ENCODE measurements at regions of chr4 and their contacts with region 1.

Region 1: DNA sequence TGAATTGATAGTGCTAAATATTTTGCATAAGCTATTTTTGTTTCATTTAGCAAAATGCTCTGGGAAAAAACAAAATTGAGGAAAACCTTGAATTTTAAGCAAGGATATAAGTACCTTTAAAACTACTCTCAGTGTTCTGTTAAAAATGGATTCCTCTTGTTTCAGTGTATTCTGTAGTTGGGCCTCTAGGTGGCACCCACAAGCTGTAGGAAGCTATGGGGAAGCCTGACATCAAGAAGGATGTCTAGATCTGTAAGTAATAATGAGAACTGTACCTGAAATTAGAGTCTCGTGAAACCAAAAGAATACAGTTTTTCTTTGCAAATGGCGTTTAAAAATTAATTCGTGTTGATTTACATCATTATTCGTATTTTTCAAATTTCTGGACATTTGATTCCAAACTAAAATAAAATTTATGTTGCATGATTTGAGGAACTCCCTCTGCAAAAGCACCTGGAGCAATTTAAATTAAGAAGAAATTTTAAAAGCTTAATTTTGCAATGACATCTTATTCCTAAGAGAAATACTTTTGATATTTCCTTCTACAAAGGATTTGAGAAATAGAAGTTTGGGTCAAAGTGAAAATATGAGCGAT is 51.2 kb downstream of the TMPRSS11E start:
- DNase-seq: peak; percentile 62
- ATAC-seq: peak; percentile 96
- H3K4me3 ChIP-seq: no peak overlapping the region
- H3K27ac ChIP-seq: no peak overlapping the region
- H3K4me1 ChIP-seq: no peaks in the 10 kb centered on the region
- H3K27me3 ChIP-seq: no peaks in the 10 kb centered on the region
- CTCF ChIP-seq: peak; percentile 88
- POLR2A ChIP-seq: no peak
- RAD21 ChIP-seq: peak; percentile 88

Region 2: GRCh38 chr4:68476191-68476590 is 22.3 kb before region 1 on chr4:
- CTCF ChIA-PET with region 1: no interaction called
- POLR2A ChIA-PET with region 1: no interaction called
- dilution Hi-C with region 1: no loop called
- in situ Hi-C with region 1: no loop called
- intact Hi-C with region 1: no loop called
- DNase-seq: no peak
- ATAC-seq: no peak
- H3K4me3 ChIP-seq: no peak overlapping the region
- H3K27ac ChIP-seq: no peak overlapping the region
- H3K4me1 ChIP-seq: no peaks in the 10 kb centered on the region
- H3K27me3 ChIP-seq: no peaks in the 10 kb centered on the region
- CTCF ChIP-seq: no peak
- POLR2A ChIP-seq: no peak
- RAD21 ChIP-seq: no peak

Region 3: GRCh38 chr4:68683005-68683404 is 184.5 kb after region 1 on chr4:
- CTCF ChIA-PET with region 1: no interaction called
- POLR2A ChIA-PET with region 1: no interaction called
- dilution Hi-C with region 1: no loop called
- in situ Hi-C with region 1: no loop called
- intact Hi-C with region 1: no loop called
- DNase-seq: no peak
- ATAC-seq: no peak
- H3K4me3 ChIP-seq: no peak overlapping the region
- H3K27ac ChIP-seq: no peak overlapping the region
- H3K4me1 ChIP-seq: no peaks in the 10 kb centered on the region
- H3K27me3 ChIP-seq: no peaks in the 10 kb centered on the region
- CTCF ChIP-seq: no peak
- POLR2A ChIP-seq: no peak
- RAD21 ChIP-seq: no peak

Region 4: DNA sequence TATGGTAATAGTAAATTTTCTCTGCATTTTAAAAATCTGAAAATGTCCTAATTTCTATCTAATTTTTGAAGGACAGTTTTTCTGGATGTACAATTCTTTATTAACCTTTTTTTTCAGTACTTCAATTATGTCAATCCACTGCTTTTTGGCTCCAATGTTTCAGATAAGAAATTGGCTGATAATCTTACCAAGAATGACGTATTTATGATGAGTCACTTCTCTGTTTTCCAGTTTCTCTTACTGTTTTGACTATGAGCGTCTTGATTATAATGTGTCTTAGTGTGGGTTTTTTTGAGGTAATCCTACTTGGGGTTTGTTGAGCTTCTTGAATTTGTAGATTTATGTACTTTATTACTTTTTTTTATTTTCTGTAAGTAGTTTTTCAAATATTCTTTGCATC is 668.8 kb after region 1 on chr4:
- CTCF ChIA-PET with region 1: interaction called, 4 read pairs
- POLR2A ChIA-PET with region 1: no interaction called
- dilution Hi-C with region 1: no loop called
- in situ Hi-C with region 1: no loop called
- intact Hi-C with region 1: loop called (anchors 1 kb)
- DNase-seq: peak; percentile 2
- ATAC-seq: no peak
- H3K4me3 ChIP-seq: no peak overlapping the region
- H3K27ac ChIP-seq: no peak overlapping the region
- H3K4me1 ChIP-seq: no peaks in the 10 kb centered on the region
- H3K27me3 ChIP-seq: no peaks in the 10 kb centered on the region
- CTCF ChIP-seq: no peak
- POLR2A ChIP-seq: no peak
- RAD21 ChIP-seq: no peak

Region 5: DNA sequence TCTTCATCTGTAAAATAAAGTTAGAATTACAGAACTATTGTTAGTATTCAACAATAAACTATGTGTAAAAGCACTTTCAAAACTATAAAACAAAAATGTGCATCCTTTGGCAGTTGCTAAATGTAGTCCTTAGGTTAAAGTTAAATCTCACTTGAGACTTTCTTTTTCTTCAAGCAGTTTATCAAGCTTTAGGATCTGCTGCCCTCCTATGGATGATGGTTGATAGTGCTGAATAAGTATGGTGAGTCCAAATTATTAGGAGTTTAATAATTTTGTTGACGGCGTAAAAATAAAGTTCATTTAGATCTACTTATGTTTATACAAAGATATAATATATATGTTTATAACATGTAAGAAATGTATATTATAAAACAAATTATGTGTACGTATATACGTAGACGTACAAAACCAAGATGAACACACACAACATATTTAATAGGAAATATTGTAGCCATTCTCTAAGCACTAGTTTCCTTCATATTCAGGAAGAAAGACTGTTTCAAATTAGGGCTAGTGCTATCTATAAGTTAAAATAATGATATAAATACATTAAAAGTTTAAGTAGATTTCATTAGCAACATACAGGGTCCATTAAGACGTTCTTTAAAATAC is 1118.7 kb after region 1 on chr4:
- CTCF ChIA-PET with region 1: no interaction called
- POLR2A ChIA-PET with region 1: no interaction called
- dilution Hi-C with region 1: no loop called
- in situ Hi-C with region 1: no loop called
- intact Hi-C with region 1: loop called (anchors 10 kb)
- DNase-seq: peak; percentile 12
- ATAC-seq: no peak
- H3K4me3 ChIP-seq: no peak overlapping the region
- H3K27ac ChIP-seq: no peak overlapping the region
- H3K4me1 ChIP-seq: no peaks in the 10 kb centered on the region
- H3K27me3 ChIP-seq: no peaks in the 10 kb centered on the region
- CTCF ChIP-seq: peak; percentile 43
- POLR2A ChIP-seq: no peak
- RAD21 ChIP-seq: peak; percentile 50

Region 6: DNA sequence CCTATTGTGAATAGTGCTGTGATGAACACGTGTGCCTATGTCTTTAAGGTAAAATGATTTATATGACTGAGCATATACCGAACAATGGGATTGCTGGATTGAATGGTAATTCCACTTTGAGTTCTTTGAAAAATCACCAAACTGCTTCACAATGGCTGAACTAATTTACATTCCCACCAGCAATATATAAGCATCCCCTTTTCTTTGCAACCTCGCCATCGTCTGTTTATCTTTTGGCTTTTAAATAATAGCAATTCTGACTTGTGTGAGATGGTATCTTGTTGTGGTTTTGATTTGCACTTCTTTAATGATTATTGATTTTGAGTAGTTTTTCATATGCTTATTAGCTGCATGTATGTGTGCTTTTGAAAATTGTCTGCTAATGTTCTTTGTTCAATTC is 1186.3 kb after region 1 on chr4:
- CTCF ChIA-PET with region 1: no interaction called
- POLR2A ChIA-PET with region 1: no interaction called
- dilution Hi-C with region 1: no loop called
- in situ Hi-C with region 1: no loop called
- intact Hi-C with region 1: no loop called
- DNase-seq: no peak
- ATAC-seq: no peak
- H3K4me3 ChIP-seq: no peak overlapping the region
- H3K27ac ChIP-seq: no peak overlapping the region
- H3K4me1 ChIP-seq: no peaks in the 10 kb centered on the region
- H3K27me3 ChIP-seq: no peaks in the 10 kb centered on the region
- CTCF ChIP-seq: no peak
- POLR2A ChIP-seq: no peak
- RAD21 ChIP-seq: no peak

Region 7: GRCh38 chr4:69881173-69881773 is 1382.8 kb after region 1 on chr4:
- CTCF ChIA-PET with region 1: no interaction called
- POLR2A ChIA-PET with region 1: no interaction called
- dilution Hi-C with region 1: no loop called
- in situ Hi-C with region 1: no loop called
- intact Hi-C with region 1: loop called (anchors 10 kb)
- DNase-seq: peak; percentile 44
- ATAC-seq: peak; percentile 87
- H3K4me3 ChIP-seq: no peak overlapping the region
- H3K27ac ChIP-seq: no peak overlapping the region
- H3K4me1 ChIP-seq: no peaks in the 10 kb centered on the region
- H3K27me3 ChIP-seq: no peaks in the 10 kb centered on the region
- CTCF ChIP-seq: peak; percentile 78
- POLR2A ChIP-seq: no peak
- RAD21 ChIP-seq: peak; percentile 82